Dorsolateral prefrontal cortex (tissue), 120 donors: ENCODE measurements at regions of chr9 and their contacts with region 1.

Region 1: DNA sequence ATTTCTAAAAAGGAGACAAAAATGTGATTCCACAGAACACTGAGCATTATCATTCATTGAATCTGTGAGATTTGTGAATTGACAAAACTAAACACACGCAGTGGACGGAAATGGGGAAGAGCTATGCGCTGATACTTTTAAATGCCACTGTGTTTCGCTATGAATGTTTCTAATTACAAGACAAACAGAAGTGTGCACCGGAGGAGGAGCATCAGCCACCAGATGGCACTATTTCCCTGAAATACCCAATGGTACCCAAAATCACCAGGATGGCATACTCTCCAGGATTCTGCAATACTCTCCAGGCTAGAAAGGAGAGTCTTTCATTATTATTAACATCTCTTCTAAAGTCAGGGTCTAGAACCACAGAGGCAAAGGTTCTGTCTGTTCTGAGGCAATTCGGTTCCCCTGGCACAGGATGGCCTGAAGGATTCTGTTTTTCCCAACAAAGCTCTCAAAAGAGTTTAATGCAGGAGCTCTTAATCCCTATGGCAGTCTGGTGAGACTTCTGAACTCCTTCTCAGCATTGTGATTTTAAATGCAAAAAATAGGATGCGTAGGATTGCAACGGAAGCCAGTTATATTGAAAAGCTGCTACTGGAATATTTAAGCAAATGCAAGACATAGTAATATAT is 13.8 kb upstream of the PUM3 start:
- DNase-seq: peak; percentile 33 to 88 (median 65)
- H3K4me3 ChIP-seq: peak overlapping the region in 4 of 59 donors; percentile 3 to 13 (median 10)
- H3K27ac ChIP-seq: no peak overlapping the region
- H3K27me3 ChIP-seq: peaks cover 0 to 2% (median 0%) of the 10 kb centered on the region in 45 donors
- CTCF ChIP-seq: peak; percentile 77 to 98 (median 90)

Region 2: DNA sequence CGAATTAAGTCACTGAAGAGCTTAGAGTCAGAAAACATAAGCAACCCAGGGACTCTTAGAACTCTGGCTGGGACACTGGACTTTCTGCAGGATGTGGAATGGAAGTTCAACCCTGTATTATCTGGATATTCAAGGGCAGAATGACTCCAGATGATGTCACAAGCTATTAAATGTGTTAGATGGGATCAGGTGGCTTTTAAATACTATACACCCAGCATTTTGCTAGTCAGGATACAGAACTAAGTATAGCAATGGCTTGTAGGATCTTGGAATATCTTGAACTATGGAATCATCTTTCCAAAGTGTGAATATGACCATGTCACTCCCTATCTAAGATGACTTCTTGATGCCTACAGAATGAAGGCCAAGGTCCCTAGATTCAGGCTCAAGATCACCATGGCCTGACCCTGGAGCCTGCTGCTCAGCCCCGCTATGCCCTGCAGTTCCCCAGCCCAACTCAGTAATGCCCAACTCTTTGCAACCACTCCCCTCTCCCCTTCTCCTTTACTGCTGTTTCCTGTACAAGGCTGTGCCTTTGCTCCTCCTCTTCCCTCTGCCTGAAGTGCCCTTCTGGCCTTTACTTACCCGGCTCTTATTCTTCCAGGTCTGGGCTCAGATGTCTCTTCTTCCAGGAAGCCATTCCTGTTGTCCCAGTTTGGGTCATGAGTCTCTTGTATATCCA is 193.2 kb before region 1 on chr9:
- intact Hi-C with region 1: no loop called
- DNase-seq: no peak
- H3K4me3 ChIP-seq: no peak overlapping the region
- H3K27ac ChIP-seq: peak overlapping the region in 19 of 59 donors; percentile 5 to 69 (median 42)
- H3K27me3 ChIP-seq: no peaks in the 10 kb centered on the region
- CTCF ChIP-seq: no peak

Region 3: DNA sequence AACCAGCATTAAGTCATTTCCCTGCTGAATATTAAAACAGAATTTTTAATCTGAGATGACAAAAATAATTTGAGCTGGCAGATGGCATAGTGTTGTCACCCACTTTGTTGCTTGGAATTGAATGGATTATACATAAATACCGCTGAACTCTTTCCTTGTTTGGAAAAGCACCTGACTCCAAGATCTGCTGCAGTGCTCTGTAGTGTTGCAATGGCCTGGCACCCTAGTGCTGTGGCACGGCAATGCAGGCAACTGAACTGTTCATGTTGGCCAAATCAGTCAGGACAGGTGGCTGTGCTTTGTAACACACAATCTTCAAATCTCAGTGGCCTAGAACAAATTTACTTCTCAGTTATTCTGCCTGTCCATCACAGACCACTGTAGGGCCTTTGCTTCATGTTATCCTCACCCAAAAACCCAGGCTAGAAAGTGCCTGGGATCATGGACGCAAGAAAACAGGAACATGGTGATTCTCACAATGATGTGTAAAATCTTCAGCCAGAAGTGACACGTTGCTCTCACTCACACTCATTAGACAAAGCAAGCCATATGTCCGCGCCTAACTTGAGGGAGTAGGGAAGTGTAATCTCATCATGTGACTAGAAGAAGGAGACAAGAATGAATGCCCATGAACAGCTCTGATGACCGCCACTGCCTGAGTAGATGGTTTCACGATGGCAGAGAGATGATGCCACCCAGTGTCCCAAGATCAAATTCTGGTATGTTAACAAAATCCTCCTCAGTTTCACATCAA is 178.1 kb after region 1 on chr9:
- intact Hi-C with region 1: loop called in 1 of 2 experiments (anchors 5 kb)
- DNase-seq: peak in 1 of 10 donors; percentile 42
- H3K4me3 ChIP-seq: no peak overlapping the region
- H3K27ac ChIP-seq: no peak overlapping the region
- H3K27me3 ChIP-seq: no peaks in the 10 kb centered on the region
- CTCF ChIP-seq: peak in 13 of 56 donors; percentile 6 to 47 (median 25)

Region 4: GRCh38 chr9:4375424-4376200 is 1517.9 kb after region 1 on chr9:
- intact Hi-C with region 1: loop called (anchors 2 to 10 kb)
- DNase-seq: no peak
- H3K4me3 ChIP-seq: no peak overlapping the region
- H3K27ac ChIP-seq: no peak overlapping the region
- H3K27me3 ChIP-seq: peaks cover 0 to 2% (median 0%) of the 10 kb centered on the region in 45 donors
- CTCF ChIP-seq: peak in 55 of 56 donors; percentile 13 to 77 (median 55)